AG04450 (cell line): ENCODE measurements at regions of chr19 and their contacts with region 1.

Region 1: GRCh38 chr19:48461982-48462655 is 6.7 kb downstream of the KCNJ14 start:
- DNase-seq: no peak
- H3K4me3 ChIP-seq: no peak overlapping the region
- H3K27ac ChIP-seq: no peak overlapping the region
- H3K27me3 ChIP-seq: no peaks in the 10 kb centered on the region
- CTCF ChIP-seq: no peak

Region 2: DNA sequence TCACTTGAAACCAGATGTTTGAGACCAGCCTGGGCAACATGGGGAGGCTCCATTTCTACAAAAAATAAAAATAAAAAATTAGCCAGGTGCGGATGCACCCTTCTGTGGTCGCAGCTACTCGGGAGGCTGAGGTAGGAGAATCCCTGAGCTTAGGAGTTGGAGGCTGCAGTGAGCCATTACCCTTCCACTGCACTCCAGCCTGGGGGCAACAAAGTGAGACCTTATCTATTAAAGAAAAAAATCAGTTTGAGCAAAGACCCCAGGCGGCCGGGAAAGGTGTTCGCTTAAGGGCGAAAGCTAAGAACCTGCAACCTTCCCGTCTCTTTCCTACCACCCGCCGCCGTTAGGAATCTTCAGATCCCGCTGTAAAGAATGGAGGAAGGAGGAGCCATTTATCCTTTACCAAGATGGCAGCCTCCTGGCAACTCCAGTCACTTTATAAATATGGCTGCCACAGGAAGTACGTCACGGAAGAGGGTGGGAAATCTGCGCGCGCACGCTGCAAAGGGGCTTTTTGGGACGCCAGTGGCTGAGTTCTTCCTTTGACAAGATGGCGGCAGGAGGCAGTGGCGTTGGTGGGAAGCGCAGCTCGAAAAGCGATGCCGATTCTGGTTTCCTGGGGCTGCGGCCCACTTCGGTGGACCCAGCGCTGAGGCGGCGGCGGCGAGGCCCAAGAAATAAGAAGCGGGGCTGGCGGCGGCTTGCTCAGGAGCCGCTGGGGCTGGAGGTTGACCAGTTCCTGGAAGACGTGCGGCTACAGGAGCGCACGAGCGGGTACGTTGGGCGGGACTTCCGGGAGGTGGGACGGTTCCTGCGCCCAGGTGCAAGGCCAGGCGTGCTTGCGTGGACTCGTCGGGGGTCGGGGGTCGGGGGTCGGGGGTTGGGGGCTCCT is 716.9 kb before region 1 on chr19 and contains the start of gene NOP53:
- CTCF ChIA-PET with region 1: no interaction called
- POLR2A ChIA-PET with region 1: interaction called, 10 read pairs
- DNase-seq: peak; percentile 95
- H3K4me3 ChIP-seq: peak within 1 kb of the TSS; percentile 75
- H3K27ac ChIP-seq: peak within 1 kb of the TSS; percentile 90
- H3K27me3 ChIP-seq: no peaks in the 10 kb centered on the region
- CTCF ChIP-seq: no peak
- polyA plus RNA-seq, gene NOP53: 114 and 123 TPM in 2 replicates